ENCODE measurements at regions of chr16 and their contacts with region 1.

Region 1: GRCh38 chr16:48398752-48399151 is 13.5 kb upstream of the SIAH1 start:
- DNase-seq: no peak
- H3K27ac ChIP-seq: no peak overlapping the region
- CTCF ChIP-seq: no peak

Region 2: DNA sequence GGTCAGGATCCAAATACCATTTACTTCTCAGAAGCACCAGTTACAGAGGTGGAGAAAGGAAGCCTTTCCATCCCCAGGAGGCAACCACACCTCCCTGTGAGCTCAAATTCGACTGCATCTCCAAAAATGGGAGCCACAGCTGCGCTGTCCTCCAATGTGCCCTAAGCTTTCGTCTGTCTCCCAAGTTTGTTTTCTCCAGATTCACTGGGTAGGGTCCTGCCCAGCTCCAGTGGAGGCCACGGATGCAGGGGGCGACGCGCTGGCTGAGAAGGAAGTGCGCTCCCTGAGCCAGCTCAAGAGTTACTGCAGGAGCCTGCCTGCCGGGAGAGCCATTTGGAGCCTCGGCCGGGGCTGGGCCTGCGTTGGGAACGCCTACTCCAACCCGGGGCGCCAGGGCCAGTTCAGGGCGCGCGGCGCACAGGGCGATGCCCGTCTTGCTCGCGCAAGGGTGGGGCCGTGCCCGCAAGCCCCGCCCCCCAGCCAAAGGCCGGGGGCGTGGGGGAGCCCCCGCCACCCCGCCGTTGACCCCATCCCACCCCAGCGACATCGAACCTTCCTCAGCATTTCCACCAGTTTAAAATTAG is 33.1 kb before region 1 on chr16:
- CTCF ChIA-PET with region 1: no interaction called
- POLR2A ChIA-PET with region 1: interaction called, 10 read pairs
- DNase-seq: peak; percentile 88
- H3K27ac ChIP-seq: peak overlapping the region; percentile 92
- CTCF ChIP-seq: no peak

Region 3: GRCh38 chr16:48385272-48386150 is 13.2 kb before region 1 on chr16 and contains the start of gene SIAH1:
- CTCF ChIA-PET with region 1: no interaction called
- POLR2A ChIA-PET with region 1: no interaction called
- DNase-seq: peak; percentile 89
- H3K27ac ChIP-seq: peak within 1 kb of the TSS; percentile 93
- CTCF ChIP-seq: no peak

Region 4: GRCh38 chr16:48556913-48557351 is 158.2 kb after region 1 on chr16:
- CTCF ChIA-PET with region 1: no interaction called
- POLR2A ChIA-PET with region 1: no interaction called
- DNase-seq: peak; percentile 24
- H3K27ac ChIP-seq: no peak overlapping the region
- CTCF ChIP-seq: no peak